Transverse colon (tissue), 4 donors: ENCODE measurements at regions of chr5 and their contacts with region 1.

Region 1: DNA sequence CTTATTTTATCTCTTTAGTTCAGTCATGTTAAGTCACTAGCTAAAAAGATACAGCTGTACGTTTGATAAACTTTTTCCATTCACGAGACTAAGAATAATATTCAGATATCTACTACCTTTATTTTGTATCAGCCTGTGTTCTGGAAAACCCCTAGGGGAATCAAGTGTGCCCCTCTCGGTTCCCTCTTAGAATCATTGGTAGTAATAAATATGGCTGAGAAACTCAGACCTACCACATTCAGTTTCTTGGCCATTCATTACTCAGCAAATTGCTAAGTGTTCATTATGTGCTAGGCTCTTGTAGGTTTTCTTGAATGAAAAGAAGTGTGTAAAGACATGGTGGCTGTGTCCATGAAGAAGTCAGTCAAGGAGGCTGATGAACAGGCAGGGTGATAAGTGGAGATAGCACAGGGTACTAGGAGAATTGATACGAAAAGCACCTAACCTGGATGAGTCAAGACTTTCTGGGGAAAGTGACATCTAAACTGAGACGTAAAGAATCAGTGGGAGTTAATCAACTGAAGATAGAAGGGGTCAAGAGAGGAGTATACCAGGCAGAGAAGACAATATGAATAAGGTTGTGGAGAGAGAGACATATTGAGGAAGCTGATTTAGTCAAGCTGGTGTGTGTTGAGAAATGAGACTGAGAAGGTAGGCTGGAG is 86.2 kb downstream of the CSNK1G3 start:
- DNase-seq: no peak
- H3K4me3 ChIP-seq: no peak overlapping the region
- H3K27ac ChIP-seq: no peak overlapping the region
- H3K4me1 ChIP-seq: no peaks in the 10 kb centered on the region
- H3K27me3 ChIP-seq: no peaks in the 10 kb centered on the region
- CTCF ChIP-seq: no peak
- EP300 ChIP-seq: no peak
- POLR2A ChIP-seq: no peak

Region 2: DNA sequence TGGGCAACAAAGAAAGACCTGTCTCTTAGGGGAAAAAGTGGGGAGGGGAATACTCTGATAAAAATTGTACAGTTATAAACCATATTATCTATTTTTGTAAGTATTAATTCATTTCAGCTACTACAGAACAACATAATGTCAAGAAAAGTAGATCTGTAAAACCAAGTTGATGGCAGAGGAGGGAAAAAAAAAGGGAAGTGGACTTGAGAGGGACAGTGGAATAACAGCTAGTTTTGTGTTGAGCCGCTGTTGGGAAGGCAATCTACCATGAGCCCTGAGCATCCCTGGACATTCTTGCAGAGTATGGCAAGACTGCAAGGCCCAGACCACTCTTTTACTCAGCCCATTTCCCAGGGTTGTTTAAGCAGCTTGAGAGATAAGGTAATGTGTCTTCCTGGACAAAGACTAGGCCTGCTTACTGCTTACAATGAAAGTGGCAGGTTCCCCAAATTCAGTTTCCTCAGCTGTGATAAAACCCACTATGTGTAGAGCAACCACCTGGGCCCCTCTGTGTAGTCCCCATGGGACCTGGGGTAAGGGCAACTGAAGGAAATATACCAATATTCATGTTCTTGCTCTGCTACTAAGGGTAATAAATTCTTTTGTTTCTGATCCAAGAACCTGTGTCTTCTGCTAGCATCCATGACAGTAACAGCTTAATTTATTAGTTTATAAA is 200.0 kb before region 1 on chr5:
- in situ Hi-C with region 1: loop called (anchors 10 to 25 kb)
- intact Hi-C with region 1: no loop called
- DNase-seq: no peak
- H3K4me3 ChIP-seq: no peak overlapping the region
- H3K27ac ChIP-seq: no peak overlapping the region
- H3K4me1 ChIP-seq: no peaks in the 10 kb centered on the region
- H3K27me3 ChIP-seq: no peaks in the 10 kb centered on the region
- CTCF ChIP-seq: no peak
- EP300 ChIP-seq: no peak
- POLR2A ChIP-seq: no peak